ENCODE measurements at regions of chr2 and their contacts with region 1.

Region 1: GRCh38 chr2:20485221-20486074 is 38.6 kb downstream of the RHOB start:
- DNase-seq: no peak
- ATAC-seq: no peak
- H3K4me3 ChIP-seq: no peak overlapping the region
- H3K27ac ChIP-seq: no peak overlapping the region
- H3K4me1 ChIP-seq: no peaks in the 10 kb centered on the region; a peak in 1 of 5 replicates
- H3K27me3 ChIP-seq: peaks cover 10 to 61% of the 10 kb centered on the region in 2 experiments; a peak in 3 of 5 replicates
- CTCF ChIP-seq: no peak
- EP300 ChIP-seq: no peak
- POLR2A ChIP-seq: no peak
- RAD21 ChIP-seq: no peak

Region 2: DNA sequence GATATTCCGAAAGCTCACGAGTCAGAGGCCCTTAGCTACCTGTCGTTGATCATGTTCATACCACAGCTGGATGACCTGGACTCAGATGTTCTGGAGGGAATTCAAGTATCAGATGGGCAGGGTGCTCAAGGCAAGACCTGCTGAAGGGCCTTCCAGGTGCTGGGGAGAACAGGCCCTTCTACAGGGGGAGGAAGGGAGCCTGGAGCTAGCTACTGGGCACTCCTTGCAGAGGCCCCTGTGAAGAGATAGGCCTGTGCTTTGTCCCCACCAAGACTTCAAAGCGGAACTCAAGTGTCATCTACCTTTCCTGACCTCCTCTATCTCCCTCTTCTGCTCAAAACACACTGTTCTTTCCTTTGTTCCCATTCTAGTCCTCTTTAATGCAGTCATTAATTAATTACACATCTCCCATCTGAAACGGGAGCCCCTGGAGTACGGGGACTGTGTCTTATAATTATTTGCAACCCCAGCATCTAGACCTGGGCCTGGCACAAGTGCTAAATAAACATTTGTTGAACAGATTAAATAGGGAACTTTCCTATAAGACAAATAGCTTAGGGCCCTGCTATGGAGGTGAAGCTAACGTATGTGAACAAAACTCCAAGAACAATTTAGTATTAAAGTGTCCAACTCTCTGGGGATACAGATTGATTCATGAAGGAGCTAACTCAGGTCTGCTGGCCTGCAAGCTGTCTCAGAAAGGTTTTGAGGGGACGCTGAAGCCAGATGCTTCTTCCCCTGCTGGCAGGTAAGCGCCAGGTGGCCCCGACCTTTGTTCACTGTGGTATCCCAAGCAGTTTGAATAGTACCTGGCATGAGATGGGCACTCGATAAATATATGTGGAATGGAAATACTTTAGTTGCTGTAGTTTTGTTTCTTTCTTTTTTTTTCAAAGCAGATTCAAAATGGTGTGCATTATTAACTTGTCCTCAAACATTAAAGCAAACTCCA is 16.6 kb before region 1 on chr2:
- CTCF ChIA-PET with region 1: no interaction called
- POLR2A ChIA-PET with region 1: interaction called, 10 read pairs
- in situ Hi-C with region 1: no loop called
- intact Hi-C with region 1: no loop called
- DNase-seq: no peak
- ATAC-seq: no peak
- H3K4me3 ChIP-seq: no peak overlapping the region
- H3K27ac ChIP-seq: no peak overlapping the region
- H3K4me1 ChIP-seq: no peaks in the 10 kb centered on the region
- H3K27me3 ChIP-seq: peaks cover 0 to 28% of the 10 kb centered on the region in 2 experiments; a peak in 4 of 5 replicates
- CTCF ChIP-seq: no peak
- EP300 ChIP-seq: no peak
- POLR2A ChIP-seq: no peak
- RAD21 ChIP-seq: no peak

Region 3: DNA sequence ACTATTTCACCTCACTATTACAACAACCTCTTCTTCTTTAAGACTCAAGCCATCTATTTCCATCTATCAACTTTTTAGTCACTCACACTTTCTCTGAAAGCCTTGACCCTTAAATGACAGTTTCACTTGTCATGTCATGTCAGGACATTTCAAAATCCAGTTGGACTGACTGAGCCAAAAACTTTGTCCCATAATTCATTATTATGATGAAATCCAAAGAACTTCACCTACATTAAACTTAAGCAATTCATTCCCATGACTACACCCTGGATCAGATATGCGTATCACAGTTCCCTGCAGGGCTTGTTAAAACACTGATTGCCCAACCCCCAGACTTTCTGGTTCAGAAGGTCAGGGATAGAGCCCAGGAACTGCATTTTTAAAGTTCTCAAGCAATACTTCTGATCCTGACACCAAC is 310.9 kb after region 1 on chr2:
- CTCF ChIA-PET with region 1: no interaction called
- POLR2A ChIA-PET with region 1: no interaction called
- in situ Hi-C with region 1: no loop called
- intact Hi-C with region 1: no loop called
- DNase-seq: no peak
- ATAC-seq: no peak
- H3K4me3 ChIP-seq: no peak overlapping the region
- H3K27ac ChIP-seq: no peak overlapping the region
- H3K4me1 ChIP-seq: no peaks in the 10 kb centered on the region; a peak in 1 of 5 replicates
- H3K27me3 ChIP-seq: no peaks in the 10 kb centered on the region
- CTCF ChIP-seq: no peak
- EP300 ChIP-seq: no peak
- POLR2A ChIP-seq: no peak
- RAD21 ChIP-seq: no peak